ENCODE measurements at regions of chr1 and their contacts with region 1.

Region 1: DNA sequence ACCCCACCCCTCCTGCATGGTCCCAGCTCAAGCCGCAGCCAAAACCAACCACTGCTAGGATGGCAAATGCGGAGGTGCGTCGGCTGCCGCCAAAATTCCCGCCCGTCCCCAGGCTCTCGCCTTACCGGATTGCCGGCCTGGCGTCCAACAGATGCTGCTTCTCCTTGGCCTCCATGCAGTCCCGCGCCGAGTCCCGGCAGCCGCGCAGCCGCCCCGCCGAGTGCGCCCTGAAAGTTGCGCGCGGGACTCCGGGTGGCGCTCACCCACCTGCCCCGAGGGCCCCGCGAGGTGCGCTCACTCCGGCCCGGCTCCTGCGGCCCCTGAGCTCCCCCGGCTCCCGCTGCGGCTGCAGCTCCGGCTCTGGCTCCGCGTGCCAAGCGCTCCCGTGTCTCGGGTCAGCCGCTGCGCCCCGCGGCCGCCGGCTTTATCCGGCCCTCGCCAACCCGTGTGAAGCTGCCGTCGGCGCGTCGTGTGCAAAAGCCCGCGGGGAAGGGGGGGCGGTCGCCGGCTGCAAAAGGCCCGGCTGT is at the start of gene SLC30A2:
- DNase-seq: no peak
- H3K4me3 ChIP-seq: no peak within 1 kb of the TSS
- H3K27ac ChIP-seq: no peak within 1 kb of the TSS
- H3K4me1 ChIP-seq: peaks cover 4% of the 10 kb centered on the region; the same call in 1 of the 2 replicates
- H3K27me3 ChIP-seq: peaks cover 8% of the 10 kb centered on the region; the same call in 1 of the 2 replicates
- CTCF ChIP-seq: no peak
- total RNA-seq, gene SLC30A2: not detected in 2 replicates

Region 2: DNA sequence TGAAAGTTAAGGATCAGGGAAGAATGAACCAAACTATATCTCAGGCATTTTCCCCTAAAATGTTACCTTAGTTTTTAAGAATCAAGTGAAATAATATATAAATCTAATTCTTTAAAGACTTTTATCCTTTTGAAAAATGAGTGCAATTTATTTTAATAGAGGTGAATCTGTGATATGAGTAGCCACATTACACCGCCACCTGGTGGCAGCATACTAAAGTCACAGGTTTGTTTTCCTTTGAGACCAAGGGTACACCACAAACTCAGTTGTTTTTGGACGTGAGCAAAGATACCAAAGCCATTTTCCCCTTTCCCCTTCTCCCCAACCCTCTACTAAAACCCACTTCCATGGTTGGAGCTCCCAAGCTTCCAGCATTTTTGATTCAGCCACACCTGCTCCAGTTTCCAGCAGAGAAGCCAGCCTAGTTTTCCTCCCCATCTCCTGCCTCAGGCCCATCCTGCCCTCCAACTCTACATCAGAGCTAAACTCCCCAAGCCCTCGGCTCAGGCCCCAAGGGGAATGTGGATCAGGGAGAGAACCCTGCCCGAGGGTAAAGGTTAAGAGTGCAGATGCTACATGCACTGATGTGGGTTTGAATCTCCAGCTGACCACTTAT is 525.2 kb before region 1 on chr1:
- CTCF ChIA-PET with region 1: no interaction called
- POLR2A ChIA-PET with region 1: no interaction called
- intact Hi-C with region 1: no loop called
- DNase-seq: peak in 1 of 2 experiments; percentile 34
- H3K4me3 ChIP-seq: no peak overlapping the region
- H3K27ac ChIP-seq: no peak overlapping the region
- H3K4me1 ChIP-seq: no peaks in the 10 kb centered on the region
- H3K27me3 ChIP-seq: no peaks in the 10 kb centered on the region
- CTCF ChIP-seq: peak; percentile 79

Region 3: GRCh38 chr1:26265405-26265804 is 219.6 kb after region 1 on chr1:
- CTCF ChIA-PET with region 1: no interaction called
- POLR2A ChIA-PET with region 1: no interaction called
- intact Hi-C with region 1: no loop called
- DNase-seq: no peak
- H3K4me3 ChIP-seq: no peak overlapping the region
- H3K27ac ChIP-seq: no peak overlapping the region
- H3K4me1 ChIP-seq: no peaks in the 10 kb centered on the region
- H3K27me3 ChIP-seq: no peaks in the 10 kb centered on the region
- CTCF ChIP-seq: no peak

Region 4: DNA sequence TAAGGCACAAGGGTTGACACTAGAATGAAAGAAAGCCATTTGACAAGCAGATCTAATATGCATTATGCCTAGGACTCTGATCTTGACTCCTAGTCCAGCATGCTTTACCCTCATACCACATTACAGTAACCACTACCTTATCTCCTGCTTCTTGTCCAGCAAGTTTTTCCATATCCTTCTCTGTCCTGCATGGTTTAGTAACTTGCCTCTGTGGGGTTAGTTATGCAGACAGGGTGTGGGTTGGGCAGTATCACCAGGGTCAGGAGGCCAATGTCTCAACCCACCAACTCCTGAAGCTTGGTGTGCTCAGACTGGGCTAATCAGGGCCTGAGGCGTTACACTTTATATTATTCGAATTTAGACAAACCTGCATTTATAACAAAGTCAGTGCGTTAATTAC is 405.1 kb after region 1 on chr1:
- CTCF ChIA-PET with region 1: no interaction called
- POLR2A ChIA-PET with region 1: no interaction called
- intact Hi-C with region 1: loop called (anchors 5 kb)
- DNase-seq: peak; percentile 22 to 52
- H3K4me3 ChIP-seq: no peak overlapping the region
- H3K27ac ChIP-seq: no peak overlapping the region
- H3K4me1 ChIP-seq: no peaks in the 10 kb centered on the region
- H3K27me3 ChIP-seq: no peaks in the 10 kb centered on the region
- CTCF ChIP-seq: no peak